OCI-LY7 (cell line): ENCODE measurements at regions of chr12 and their contacts with region 1.

Region 1: DNA sequence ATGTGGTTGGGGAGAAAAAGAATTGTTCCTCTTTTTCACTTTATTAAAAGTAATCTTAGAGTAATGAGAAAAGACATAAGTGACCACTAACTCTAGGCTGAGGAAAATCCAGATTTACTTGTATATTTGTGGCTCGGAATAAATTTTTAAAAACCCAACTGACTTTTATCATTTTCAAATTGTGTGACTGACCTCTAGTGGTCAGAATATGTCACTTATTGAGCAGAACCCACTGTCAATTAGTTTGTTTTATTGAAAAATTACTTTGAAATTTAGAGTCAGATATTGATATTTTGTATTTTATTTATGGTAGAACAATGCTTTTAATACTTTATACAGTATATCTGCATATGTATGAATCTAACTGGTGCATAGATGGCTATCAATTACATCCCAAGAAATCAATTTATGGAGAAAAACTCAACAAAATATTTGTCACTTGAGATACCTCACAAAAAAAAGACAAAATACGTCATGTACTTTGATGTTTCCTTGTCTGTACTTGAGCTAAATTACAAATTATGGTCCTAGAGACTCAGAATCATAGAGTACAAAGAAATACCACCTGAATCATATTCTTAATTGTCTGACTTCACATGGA is 229.4 kb downstream of the CNTN1 start:
- DNase-seq: peak; percentile 37
- H3K4me3 ChIP-seq: no peak overlapping the region
- H3K27ac ChIP-seq: no peak overlapping the region
- H3K4me1 ChIP-seq: no peaks in the 10 kb centered on the region
- CTCF ChIP-seq: peak; percentile 93

Region 2: GRCh38 chr12:40336573-40337199 is 585.0 kb before region 1 on chr12:
- CTCF ChIA-PET with region 1: no interaction called
- POLR2A ChIA-PET with region 1: no interaction called
- intact Hi-C with region 1: loop called (anchors 5 kb)
- DNase-seq: peak; percentile 28
- H3K4me3 ChIP-seq: no peak overlapping the region
- H3K27ac ChIP-seq: no peak overlapping the region
- H3K4me1 ChIP-seq: no peaks in the 10 kb centered on the region
- CTCF ChIP-seq: peak; percentile 76

Region 3: DNA sequence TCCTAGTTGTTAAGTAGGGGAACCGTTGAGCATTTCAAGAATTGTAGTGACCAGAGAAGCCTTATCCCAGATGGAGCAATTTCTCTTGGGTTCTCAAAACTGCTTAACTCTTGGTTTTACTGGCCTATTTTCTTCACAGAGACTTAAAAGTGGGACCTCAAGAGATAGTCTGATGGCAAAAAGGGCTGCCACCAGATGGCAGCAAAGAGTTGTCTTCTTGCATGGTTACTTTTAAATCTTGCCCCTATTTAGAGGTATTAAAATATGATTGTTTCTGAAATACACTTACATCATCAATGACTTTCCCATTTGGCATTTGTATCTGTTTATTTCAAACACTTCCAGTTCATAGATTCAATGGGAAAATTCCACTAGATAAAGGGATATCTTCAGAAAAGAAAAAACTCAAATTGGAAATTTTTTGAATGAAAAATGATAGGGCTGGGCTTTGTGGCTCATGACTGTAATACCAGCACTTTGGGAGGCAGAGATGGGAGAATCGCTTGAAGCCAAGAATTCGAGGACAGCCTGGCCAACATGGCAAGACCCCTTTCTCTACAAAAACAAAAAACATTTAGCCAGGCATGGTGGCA is 299.3 kb before region 1 on chr12:
- CTCF ChIA-PET with region 1: no interaction called
- POLR2A ChIA-PET with region 1: no interaction called
- intact Hi-C with region 1: loop called (anchors 1 kb)
- DNase-seq: peak; percentile 59
- H3K4me3 ChIP-seq: no peak overlapping the region
- H3K27ac ChIP-seq: no peak overlapping the region
- H3K4me1 ChIP-seq: no peaks in the 10 kb centered on the region
- CTCF ChIP-seq: peak; percentile 94

Region 4: DNA sequence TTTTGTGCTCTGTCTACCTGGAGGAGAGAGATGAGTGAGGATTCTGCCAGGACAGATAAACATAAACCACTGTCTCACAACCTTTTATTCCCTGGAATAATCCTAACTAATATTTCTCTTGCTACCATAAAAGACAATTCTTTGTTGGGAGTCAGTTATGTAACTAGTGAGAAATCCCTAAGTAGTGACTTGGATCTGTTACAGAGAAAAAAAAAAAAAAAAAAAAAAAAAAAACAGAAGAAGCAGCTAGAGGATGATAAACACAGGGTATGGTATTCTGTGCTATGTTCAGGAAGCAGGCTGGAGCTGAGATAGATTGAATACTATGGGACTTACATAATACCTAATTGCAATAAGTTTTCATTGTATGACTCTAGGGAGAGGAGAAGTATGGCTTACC is 50.7 kb before region 1 on chr12:
- CTCF ChIA-PET with region 1: no interaction called
- POLR2A ChIA-PET with region 1: no interaction called
- intact Hi-C with region 1: no loop called
- DNase-seq: no peak
- H3K4me3 ChIP-seq: no peak overlapping the region
- H3K27ac ChIP-seq: no peak overlapping the region
- H3K4me1 ChIP-seq: no peaks in the 10 kb centered on the region
- CTCF ChIP-seq: no peak